GM12878 (cell line): ENCODE measurements at regions of chr5 and their contacts with region 1.

Region 1: GRCh38 chr5:157253547-157253946 is 12.4 kb upstream of the CYFIP2 start:
- DNase-seq: no peak
- ATAC-seq: peak; percentile 82
- H3K4me3 ChIP-seq: peak overlapping the region; percentile 4; the same call in 1 of the 2 replicates
- H3K27ac ChIP-seq: no peak overlapping the region; the same call in 1 of the 2 replicates
- H3K4me1 ChIP-seq: peaks cover 15% of the 10 kb centered on the region
- H3K27me3 ChIP-seq: no peaks in the 10 kb centered on the region
- CTCF ChIP-seq: peak; percentile 85 to 97 (median 88)
- EP300 ChIP-seq: no peak
- POLR2A ChIP-seq: no peak
- RAD21 ChIP-seq: peak; percentile 97

Region 2: GRCh38 chr5:157004893-157005551 is 248.5 kb before region 1 on chr5:
- CTCF ChIA-PET with region 1: no interaction called
- POLR2A ChIA-PET with region 1: no interaction called
- RAD21 ChIA-PET with region 1: no interaction called
- SMC1A ChIA-PET with region 1: no interaction called
- in situ Hi-C with region 1: no loop called
- intact Hi-C with region 1: no loop called
- DNase-seq: no peak
- ATAC-seq: peak; percentile 94
- H3K4me3 ChIP-seq: no peak overlapping the region
- H3K27ac ChIP-seq: no peak overlapping the region
- H3K4me1 ChIP-seq: no peaks in the 10 kb centered on the region
- H3K27me3 ChIP-seq: no peaks in the 10 kb centered on the region
- CTCF ChIP-seq: no peak
- EP300 ChIP-seq: no peak
- POLR2A ChIP-seq: no peak
- RAD21 ChIP-seq: no peak

Region 3: DNA sequence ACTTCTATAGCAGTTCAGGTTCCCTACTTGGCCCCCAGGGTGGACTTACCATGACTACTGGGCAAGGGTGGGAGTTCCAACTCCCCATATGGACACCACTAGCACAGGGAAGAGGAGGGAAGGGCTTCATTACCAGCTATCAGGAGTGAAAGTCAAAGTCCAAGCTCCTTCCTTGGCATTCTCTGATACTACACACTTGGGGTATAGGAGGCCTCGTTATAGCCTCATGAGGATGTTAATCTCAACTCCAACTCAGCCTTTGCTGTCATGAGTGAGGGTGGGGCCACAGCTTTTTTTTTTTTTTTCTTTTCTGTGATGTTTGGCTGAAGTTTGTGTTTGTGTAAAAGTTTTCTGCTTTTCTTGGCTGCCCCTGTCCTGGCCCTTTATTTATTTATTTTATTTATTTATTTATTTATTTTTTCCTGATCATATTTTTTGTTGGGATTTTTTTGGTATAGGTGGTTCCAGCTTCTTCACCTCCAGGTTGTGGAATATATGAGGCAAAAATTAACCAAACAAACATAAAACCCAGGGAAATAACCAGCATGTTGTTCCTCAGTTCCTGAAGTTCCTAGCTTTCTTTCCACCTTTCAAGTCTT is 96.2 kb before region 1 on chr5:
- CTCF ChIA-PET with region 1: interaction called, 244 read pairs
- POLR2A ChIA-PET with region 1: interaction called, 5 read pairs
- RAD21 ChIA-PET with region 1: interaction called, 15 read pairs
- SMC1A ChIA-PET with region 1: interaction called, 33 read pairs
- in situ Hi-C with region 1: no loop called
- intact Hi-C with region 1: no loop called
- DNase-seq: no peak
- ATAC-seq: no peak
- H3K4me3 ChIP-seq: no peak overlapping the region
- H3K27ac ChIP-seq: no peak overlapping the region
- H3K4me1 ChIP-seq: no peaks in the 10 kb centered on the region
- H3K27me3 ChIP-seq: no peaks in the 10 kb centered on the region
- CTCF ChIP-seq: no peak
- EP300 ChIP-seq: no peak
- POLR2A ChIP-seq: no peak
- RAD21 ChIP-seq: no peak

Region 4: GRCh38 chr5:157212307-157212706 is 41.2 kb before region 1 on chr5:
- CTCF ChIA-PET with region 1: interaction called, 53 read pairs
- POLR2A ChIA-PET with region 1: interaction called, 4 read pairs
- RAD21 ChIA-PET with region 1: interaction called, 52 read pairs
- SMC1A ChIA-PET with region 1: interaction called, 45 read pairs
- in situ Hi-C with region 1: no loop called
- intact Hi-C with region 1: no loop called
- DNase-seq: no peak
- ATAC-seq: no peak
- H3K4me3 ChIP-seq: no peak overlapping the region
- H3K27ac ChIP-seq: no peak overlapping the region
- H3K4me1 ChIP-seq: peaks cover 37% of the 10 kb centered on the region
- H3K27me3 ChIP-seq: no peaks in the 10 kb centered on the region
- CTCF ChIP-seq: no peak
- EP300 ChIP-seq: no peak
- POLR2A ChIP-seq: no peak
- RAD21 ChIP-seq: no peak

Region 5: DNA sequence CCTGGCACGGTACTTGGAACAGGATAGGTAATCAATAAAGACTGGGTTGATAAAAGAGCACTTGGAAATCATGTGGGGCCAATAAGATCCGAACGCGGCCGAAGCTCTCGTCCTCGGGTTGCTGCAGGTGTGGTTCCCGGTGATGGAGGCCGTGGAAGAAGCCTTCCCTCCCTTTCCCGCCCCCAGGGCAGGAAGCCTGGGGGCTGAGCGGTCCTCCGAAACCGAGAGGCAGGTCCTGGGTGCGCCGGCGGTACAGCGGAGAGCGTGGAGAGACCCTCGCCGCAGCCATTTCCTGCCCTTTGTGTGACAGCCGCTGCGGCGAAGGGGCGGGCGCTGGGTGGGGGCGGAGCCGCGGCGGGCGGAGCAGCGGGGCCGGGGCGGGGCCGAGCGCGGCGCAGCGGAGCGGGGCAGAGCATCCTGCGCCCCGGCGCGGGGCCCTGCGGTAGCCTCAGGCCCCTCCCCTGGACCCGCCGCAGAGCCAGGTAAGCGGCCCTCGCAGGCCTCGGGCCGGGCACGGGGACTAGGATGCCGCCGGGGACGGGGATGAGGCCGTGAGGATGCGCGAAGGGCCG is 12.3 kb after region 1 on chr5 and contains the start of gene CYFIP2:
- CTCF ChIA-PET with region 1: interaction called, 94 read pairs
- POLR2A ChIA-PET with region 1: interaction called, 12 read pairs
- RAD21 ChIA-PET with region 1: interaction called, 99 read pairs
- SMC1A ChIA-PET with region 1: interaction called, 73 read pairs
- in situ Hi-C with region 1: no loop called
- intact Hi-C with region 1: no loop called
- DNase-seq: no peak
- ATAC-seq: peak; percentile 87
- H3K4me3 ChIP-seq: peak within 1 kb of the TSS; percentile 91
- H3K27ac ChIP-seq: peak within 1 kb of the TSS; percentile 83
- H3K4me1 ChIP-seq: peaks cover 37% of the 10 kb centered on the region
- H3K27me3 ChIP-seq: no peaks in the 10 kb centered on the region
- CTCF ChIP-seq: no peak
- EP300 ChIP-seq: no peak
- POLR2A ChIP-seq: peak; percentile 80
- RAD21 ChIP-seq: no peak
- polyA plus RNA-seq, gene CYFIP2: 43.4 to 68.6 TPM

Region 6: DNA sequence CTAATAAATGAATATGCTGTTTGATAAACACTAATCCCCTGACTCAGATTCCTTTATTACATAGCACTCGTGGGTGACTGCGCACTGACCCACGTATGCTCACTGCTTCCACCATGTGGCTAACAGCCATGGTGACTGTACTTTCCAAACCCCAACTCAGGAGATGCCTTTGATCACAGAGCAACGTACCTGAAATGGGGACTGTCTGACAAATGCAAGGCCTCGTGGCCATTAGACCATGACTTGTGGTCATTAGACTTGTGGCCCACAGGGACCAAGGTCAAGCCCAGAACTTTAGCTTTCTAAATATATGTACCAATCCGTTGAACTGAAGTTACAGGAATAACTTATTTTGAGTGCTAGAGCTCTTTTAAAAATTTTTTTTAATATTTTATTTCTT is 58.9 kb after region 1 on chr5:
- CTCF ChIA-PET with region 1: interaction called, 213 read pairs
- POLR2A ChIA-PET with region 1: interaction called, 5 read pairs
- RAD21 ChIA-PET with region 1: interaction called, 84 read pairs
- SMC1A ChIA-PET with region 1: interaction called, 132 read pairs
- in situ Hi-C with region 1: loop called (anchors 5 kb)
- intact Hi-C with region 1: loop called (anchors 1 kb)
- DNase-seq: peak; percentile 59
- ATAC-seq: peak; percentile 96
- H3K4me3 ChIP-seq: no peak overlapping the region
- H3K27ac ChIP-seq: no peak overlapping the region
- H3K4me1 ChIP-seq: no peaks in the 10 kb centered on the region
- H3K27me3 ChIP-seq: no peaks in the 10 kb centered on the region
- CTCF ChIP-seq: peak; percentile 80 to 86 (median 80)
- EP300 ChIP-seq: no peak
- POLR2A ChIP-seq: no peak
- RAD21 ChIP-seq: peak; percentile 72

Region 7: DNA sequence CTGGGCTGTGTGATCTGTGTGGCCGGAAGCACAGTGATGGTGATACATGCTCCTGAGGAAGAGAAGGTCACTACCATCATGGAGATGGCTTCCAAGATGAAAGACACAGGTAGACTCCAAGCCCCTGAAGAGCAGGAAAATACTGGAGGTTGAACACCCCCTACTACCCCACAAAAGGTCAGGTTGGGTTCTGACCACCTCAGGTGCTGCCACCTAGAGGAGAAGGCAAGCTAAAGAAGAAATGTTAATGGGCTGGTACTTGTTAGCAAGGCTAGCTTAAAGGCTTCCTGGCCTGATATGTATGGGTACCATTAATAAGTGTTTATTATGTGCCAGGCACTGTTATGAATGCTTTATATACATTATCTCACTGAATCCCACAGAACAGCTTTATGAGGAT is 218.2 kb after region 1 on chr5:
- CTCF ChIA-PET with region 1: interaction called, 14 read pairs
- POLR2A ChIA-PET with region 1: no interaction called
- RAD21 ChIA-PET with region 1: interaction called, 11 read pairs
- SMC1A ChIA-PET with region 1: interaction called, 9 read pairs
- in situ Hi-C with region 1: no loop called
- intact Hi-C with region 1: loop called (anchors 10 kb)
- DNase-seq: no peak
- ATAC-seq: peak; percentile 81
- H3K4me3 ChIP-seq: no peak overlapping the region
- H3K27ac ChIP-seq: no peak overlapping the region
- H3K4me1 ChIP-seq: no peaks in the 10 kb centered on the region
- H3K27me3 ChIP-seq: no peaks in the 10 kb centered on the region
- CTCF ChIP-seq: peak; percentile 48 to 66 (median 62); a peak in 5 of 6 replicates
- EP300 ChIP-seq: no peak
- POLR2A ChIP-seq: no peak
- RAD21 ChIP-seq: peak; percentile 68